ENCODE measurements at regions of chr14 and their contacts with region 1.

Region 1: GRCh38 chr14:100025111-100025510 is 40.1 kb upstream of the EVL start:
- DNase-seq: peak; percentile 37
- H3K4me3 ChIP-seq: no peak overlapping the region
- H3K27ac ChIP-seq: no peak overlapping the region
- H3K4me1 ChIP-seq: peaks cover 7% of the 10 kb centered on the region
- H3K27me3 ChIP-seq: no peaks in the 10 kb centered on the region
- CTCF ChIP-seq: peak; percentile 33 to 71

Region 2: DNA sequence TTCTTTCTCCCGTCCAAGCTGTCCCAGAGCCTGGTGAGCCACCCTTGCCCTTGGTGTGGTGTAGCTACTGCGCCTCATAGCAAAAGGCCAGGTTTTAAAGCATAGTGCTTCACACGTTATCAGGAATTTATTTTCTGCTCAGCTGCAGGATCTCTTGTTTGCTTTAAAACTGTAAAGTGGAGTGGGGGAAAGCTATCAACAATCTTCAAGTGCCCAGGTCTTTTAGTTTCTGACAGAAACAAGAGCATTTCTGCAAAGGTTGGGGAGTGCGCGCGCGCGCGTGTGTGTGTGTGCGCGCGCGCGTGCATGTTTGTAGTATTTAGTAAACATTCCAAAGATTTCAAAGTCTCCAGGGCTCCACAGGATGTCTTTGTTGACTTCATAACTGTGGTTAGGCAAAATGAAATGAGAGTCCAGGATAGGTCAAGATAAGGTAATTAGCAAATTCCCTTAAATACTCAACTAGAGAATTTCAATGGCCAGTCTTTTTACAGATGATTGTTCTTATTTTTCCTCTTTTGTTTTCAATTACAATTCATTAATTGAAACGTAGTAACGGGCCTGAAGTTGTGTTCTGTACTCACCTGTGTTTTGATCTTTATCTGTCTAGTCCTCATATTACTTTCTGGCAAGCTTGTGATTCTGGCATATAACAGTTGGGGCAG is 186.3 kb before region 1 on chr14:
- CTCF ChIA-PET with region 1: no interaction called
- dilution Hi-C with region 1: no loop called
- in situ Hi-C with region 1: no loop called
- intact Hi-C with region 1: no loop called
- DNase-seq: no peak
- H3K4me3 ChIP-seq: no peak overlapping the region
- H3K27ac ChIP-seq: no peak overlapping the region
- H3K4me1 ChIP-seq: no peaks in the 10 kb centered on the region
- H3K27me3 ChIP-seq: peaks cover 28% of the 10 kb centered on the region
- CTCF ChIP-seq: no peak

Region 3: DNA sequence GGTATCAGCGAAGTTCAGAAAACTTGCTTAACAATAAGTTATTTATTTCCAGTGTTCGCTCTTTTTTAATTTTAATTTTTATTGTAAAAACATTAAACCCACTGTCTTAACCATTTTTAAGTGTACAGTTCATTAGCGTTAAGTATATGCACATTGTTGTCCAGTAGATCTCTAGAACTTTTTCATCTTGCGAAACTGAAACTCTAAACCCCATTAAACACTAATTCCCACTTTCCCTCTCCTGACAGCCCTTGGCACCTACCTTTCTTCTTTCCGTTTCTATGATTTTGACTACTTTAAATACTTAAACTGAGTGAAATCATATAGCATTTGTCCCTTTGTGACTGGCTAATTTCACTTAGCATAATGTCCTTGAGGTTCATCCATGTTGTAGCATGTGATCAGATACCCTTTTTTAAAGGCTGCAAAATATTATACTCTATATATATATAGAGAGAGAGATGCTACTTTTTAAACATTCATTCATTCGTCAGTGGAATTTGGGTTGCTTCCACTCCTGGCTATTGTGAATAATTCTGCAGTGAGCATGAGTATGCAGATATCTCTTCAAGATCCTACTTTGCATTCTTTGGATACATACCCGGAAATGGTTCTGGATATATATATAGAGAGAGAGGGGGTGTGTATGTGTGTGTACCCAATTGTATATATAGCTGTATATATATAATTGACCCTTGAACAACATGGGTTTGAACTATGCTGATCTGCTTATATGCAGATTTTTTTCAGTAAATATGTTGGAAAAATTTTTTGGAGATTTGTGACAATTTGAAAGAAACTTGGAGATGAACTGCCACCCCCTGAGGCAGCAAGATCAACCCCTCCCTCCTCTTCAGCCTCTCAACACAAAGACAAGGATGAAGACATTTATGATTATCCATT is 34.6 kb before region 1 on chr14:
- CTCF ChIA-PET with region 1: no interaction called
- dilution Hi-C with region 1: loop called (anchors 5 kb)
- in situ Hi-C with region 1: loop called in 1 of 2 experiments (anchors 5 kb)
- intact Hi-C with region 1: loop called (anchors 1 kb)
- DNase-seq: no peak
- H3K4me3 ChIP-seq: no peak overlapping the region
- H3K27ac ChIP-seq: no peak overlapping the region
- H3K4me1 ChIP-seq: no peaks in the 10 kb centered on the region
- H3K27me3 ChIP-seq: no peaks in the 10 kb centered on the region
- CTCF ChIP-seq: no peak